ENCODE measurements at regions of chr10 and their contacts with region 1.

Region 1: DNA sequence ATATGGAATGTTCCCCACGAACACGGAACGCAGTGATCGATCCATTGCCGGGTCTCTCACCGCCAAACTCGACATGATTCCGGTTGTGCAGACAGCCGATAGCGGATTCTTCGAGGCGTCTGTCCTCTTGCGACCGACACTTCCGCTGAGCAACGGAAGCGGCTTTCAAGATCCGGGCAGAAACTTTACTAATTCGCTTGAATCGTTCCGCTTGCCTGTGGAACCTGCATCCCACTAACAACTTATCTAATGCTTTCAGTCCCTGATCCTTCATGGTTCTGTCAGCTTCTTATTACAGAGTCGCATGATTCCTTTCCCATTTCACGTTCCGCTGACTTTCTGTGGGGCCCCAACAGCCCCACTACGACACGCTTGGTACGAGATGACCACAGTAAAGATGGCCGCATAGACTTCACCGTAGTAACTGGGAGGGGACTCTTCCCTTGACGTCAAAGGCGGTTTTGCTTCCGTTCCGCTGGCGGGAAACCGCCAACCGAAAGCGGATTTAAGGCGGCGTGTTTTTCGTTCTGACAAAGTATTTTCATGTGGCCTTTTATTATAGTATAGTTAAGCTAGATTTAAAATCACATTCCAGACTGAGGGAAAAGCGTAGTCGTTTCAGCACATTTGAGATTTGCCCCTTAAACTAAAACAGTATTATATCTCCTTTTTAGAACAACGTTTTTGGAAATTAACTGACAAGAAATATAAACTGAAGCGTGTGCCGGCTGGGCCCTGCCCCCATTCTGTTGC is at the start of gene CSTF2T:
- DNase-seq: peak; percentile 79 to 94
- ATAC-seq: peak; percentile 96 to 99 (median 97)
- H3K4me3 ChIP-seq: peak within 1 kb of the TSS; percentile 62 to 84 (median 72)
- H3K27ac ChIP-seq: peak within 1 kb of the TSS; percentile 88 to 99 (median 94)
- H3K4me1 ChIP-seq: peaks cover 2 to 53% (median 43%) of the 10 kb centered on the region in 9 donors
- H3K27me3 ChIP-seq: no peaks in the 10 kb centered on the region
- CTCF ChIP-seq: no peak
- total RNA-seq, gene CSTF2T: 20.6 to 31.6 (median 23.1) TPM

Region 2: GRCh38 chr10:50988792-50989191 is 710.9 kb before region 1 on chr10:
- intact Hi-C with region 1: loop called in 1 of 10 experiments (anchors 10 kb)
- DNase-seq: no peak
- ATAC-seq: no peak
- H3K4me3 ChIP-seq: peak overlapping the region in 7 of 10 donors; percentile 9 to 79 (median 71)
- H3K27ac ChIP-seq: peak overlapping the region in 7 of 10 donors; percentile 5 to 94 (median 41)
- H3K4me1 ChIP-seq: peaks cover 0 to 20% (median 6%) of the 10 kb centered on the region in 9 donors
- H3K27me3 ChIP-seq: peaks cover 0 to 39% (median 0%) of the 10 kb centered on the region in 7 donors
- CTCF ChIP-seq: peak in 8 of 9 donors; percentile 15 to 63 (median 46)

Measured in heart right ventricle (tissue), 16 donors.